IMR-90 (cell line): ENCODE measurements at regions of chr10 and their contacts with region 1.

Region 1: GRCh38 chr10:132654702-132655661 is 117.4 kb downstream of the INPP5A start:
- DNase-seq: peak; percentile 55
- ATAC-seq: peak; percentile 97
- H3K4me3 ChIP-seq: no peak overlapping the region
- H3K27ac ChIP-seq: no peak overlapping the region
- H3K4me1 ChIP-seq: no peaks in the 10 kb centered on the region
- H3K27me3 ChIP-seq: no peaks in the 10 kb centered on the region
- CTCF ChIP-seq: peak; percentile 95
- POLR2A ChIP-seq: no peak
- RAD21 ChIP-seq: peak; percentile 99

Region 2: DNA sequence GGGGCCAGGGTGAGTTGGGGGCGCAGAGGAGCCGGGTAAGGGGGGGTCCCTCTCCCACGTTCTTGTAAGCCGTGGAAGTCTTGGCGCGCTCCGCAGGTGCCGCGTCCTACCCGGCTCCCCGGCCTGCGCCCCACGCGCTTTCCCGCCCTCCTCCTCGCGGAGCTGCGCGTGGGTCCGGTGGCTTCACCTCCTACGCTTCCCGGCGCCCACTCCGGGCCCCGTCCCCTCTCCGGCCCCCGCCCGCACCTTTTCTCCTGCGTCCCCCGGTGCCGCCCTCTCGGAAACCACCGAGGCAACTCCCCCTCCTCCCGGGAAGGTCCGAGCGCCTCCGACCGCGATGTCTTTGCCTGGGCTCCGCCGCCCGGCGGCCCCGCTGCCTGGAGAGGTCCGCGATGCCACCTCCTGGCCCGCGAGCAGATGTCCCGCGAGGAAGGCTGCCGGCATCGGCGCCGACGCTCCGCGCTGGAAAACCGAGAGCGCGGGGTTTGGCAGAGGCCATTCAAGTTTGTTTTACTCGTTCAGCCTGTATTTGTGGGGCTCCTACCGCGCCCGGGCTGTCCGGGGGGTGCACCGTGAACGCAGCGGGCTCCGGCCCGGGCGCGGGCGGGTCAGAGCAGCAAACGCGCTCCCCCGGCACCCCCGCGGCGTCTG is 133.3 kb after region 1 on chr10:
- CTCF ChIA-PET with region 1: interaction called, 3 read pairs
- POLR2A ChIA-PET with region 1: no interaction called
- dilution Hi-C with region 1: no loop called
- in situ Hi-C with region 1: no loop called
- intact Hi-C with region 1: loop called (anchors 1 kb)
- DNase-seq: peak; percentile 16
- ATAC-seq: peak; percentile 59
- H3K4me3 ChIP-seq: no peak overlapping the region
- H3K27ac ChIP-seq: no peak overlapping the region
- H3K4me1 ChIP-seq: no peaks in the 10 kb centered on the region
- H3K27me3 ChIP-seq: peaks cover 67% of the 10 kb centered on the region
- CTCF ChIP-seq: peak; percentile 41
- POLR2A ChIP-seq: no peak
- RAD21 ChIP-seq: peak; percentile 45

Region 3: GRCh38 chr10:132904181-132904819 is 249.3 kb after region 1 on chr10:
- CTCF ChIA-PET with region 1: no interaction called
- POLR2A ChIA-PET with region 1: no interaction called
- dilution Hi-C with region 1: no loop called
- in situ Hi-C with region 1: no loop called
- intact Hi-C with region 1: loop called (anchors 2 kb)
- DNase-seq: peak; percentile 24
- ATAC-seq: peak; percentile 76
- H3K4me3 ChIP-seq: no peak overlapping the region
- H3K27ac ChIP-seq: no peak overlapping the region
- H3K4me1 ChIP-seq: no peaks in the 10 kb centered on the region
- H3K27me3 ChIP-seq: peaks cover 11% of the 10 kb centered on the region
- CTCF ChIP-seq: peak; percentile 71
- POLR2A ChIP-seq: no peak
- RAD21 ChIP-seq: peak; percentile 76

Region 4: DNA sequence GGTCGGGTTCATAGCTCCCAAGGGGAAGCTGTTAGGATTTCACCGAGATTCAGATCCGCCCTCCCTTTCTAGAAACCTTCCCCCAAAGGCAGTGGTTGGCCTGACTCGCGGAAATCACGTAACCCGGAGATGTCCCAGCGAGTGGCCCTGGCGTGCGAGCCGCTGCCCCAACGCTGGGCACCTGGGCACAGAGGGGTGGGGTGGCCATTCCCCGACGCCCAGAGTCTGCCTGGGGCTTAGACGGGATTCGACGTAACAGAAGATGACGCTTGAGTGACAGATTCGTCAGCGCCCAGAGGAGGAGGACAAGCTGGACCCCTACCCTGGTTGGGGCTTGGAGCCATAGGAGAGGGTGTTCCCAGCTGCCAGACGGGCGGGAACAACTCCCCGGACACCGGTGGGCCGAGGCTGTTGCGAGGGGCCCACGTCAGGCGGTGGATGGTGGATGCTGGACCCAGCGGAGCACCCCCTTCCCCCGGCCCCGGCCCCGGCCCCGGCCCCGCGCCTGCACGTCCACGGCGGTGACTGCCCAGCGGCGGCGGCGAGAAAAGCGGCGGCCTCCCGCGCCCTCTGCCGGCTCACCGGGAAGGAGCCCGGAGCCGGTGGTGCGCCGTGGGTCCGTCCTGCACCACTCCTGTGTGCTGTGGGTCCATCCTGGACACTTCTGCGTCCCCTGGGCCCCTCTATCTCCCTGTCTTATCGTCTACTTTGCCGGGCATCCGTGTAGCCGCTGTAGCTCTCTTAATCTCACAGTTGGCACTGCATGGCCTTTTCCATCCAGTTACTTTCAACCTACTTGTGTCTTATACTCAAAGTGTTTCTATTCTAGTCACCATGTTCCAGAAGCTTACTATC is 469.6 kb after region 1 on chr10:
- CTCF ChIA-PET with region 1: no interaction called
- POLR2A ChIA-PET with region 1: no interaction called
- dilution Hi-C with region 1: no loop called
- in situ Hi-C with region 1: loop called (anchors 25 kb)
- intact Hi-C with region 1: no loop called
- DNase-seq: no peak
- ATAC-seq: peak; percentile 92
- H3K4me3 ChIP-seq: no peak overlapping the region
- H3K27ac ChIP-seq: no peak overlapping the region
- H3K4me1 ChIP-seq: no peaks in the 10 kb centered on the region
- H3K27me3 ChIP-seq: no peaks in the 10 kb centered on the region; the same call in 1 of the 2 replicates
- CTCF ChIP-seq: peak; percentile 45
- POLR2A ChIP-seq: no peak
- RAD21 ChIP-seq: peak; percentile 47